CD4-positive, alpha-beta T cell (primary cell): ENCODE measurements at regions of chr6 and their contacts with region 1.

Region 1: GRCh38 chr6:32432050-32432450 is 7.6 kb upstream of the HLA-DRA start:
- DNase-seq: peak in 3 of 14 experiments; percentile 56 to 66 (median 63)
- ATAC-seq: no peak
- H3K4me3 ChIP-seq: no peak overlapping the region
- H3K4me3 Mint-ChIP-seq: no peak overlapping the region
- H3K27ac ChIP-seq: no peak overlapping the region
- H3K27ac Mint-ChIP-seq: no peak overlapping the region
- H3K4me1 ChIP-seq: no peaks in the 10 kb centered on the region
- H3K4me1 Mint-ChIP-seq: no peaks in the 10 kb centered on the region
- H3K27me3 ChIP-seq: no peaks in the 10 kb centered on the region
- H3K27me3 Mint-ChIP-seq: peaks cover 5% of the 10 kb centered on the region
- CTCF ChIP-seq: peak; percentile 64

Region 2: GRCh38 chr6:31615748-31616147 is 816.3 kb before region 1 on chr6:
- CTCF ChIA-PET with region 1: no interaction called
- POLR2A ChIA-PET with region 1: no interaction called
- intact Hi-C with region 1: no loop called
- DNase-seq: peak in 8 of 14 experiments; percentile 12 to 62 (median 35)
- ATAC-seq: no peak
- H3K4me3 ChIP-seq: peak overlapping the region; percentile 46
- H3K4me3 Mint-ChIP-seq: peak overlapping the region; percentile 85
- H3K27ac ChIP-seq: peak overlapping the region in 1 of 2 donors; percentile 29
- H3K27ac Mint-ChIP-seq: peak overlapping the region; percentile 86
- H3K4me1 ChIP-seq: peaks cover 27% of the 10 kb centered on the region
- H3K4me1 Mint-ChIP-seq: peaks cover 40% of the 10 kb centered on the region
- H3K27me3 ChIP-seq: no peaks in the 10 kb centered on the region
- H3K27me3 Mint-ChIP-seq: no peaks in the 10 kb centered on the region
- CTCF ChIP-seq: no peak

Region 3: DNA sequence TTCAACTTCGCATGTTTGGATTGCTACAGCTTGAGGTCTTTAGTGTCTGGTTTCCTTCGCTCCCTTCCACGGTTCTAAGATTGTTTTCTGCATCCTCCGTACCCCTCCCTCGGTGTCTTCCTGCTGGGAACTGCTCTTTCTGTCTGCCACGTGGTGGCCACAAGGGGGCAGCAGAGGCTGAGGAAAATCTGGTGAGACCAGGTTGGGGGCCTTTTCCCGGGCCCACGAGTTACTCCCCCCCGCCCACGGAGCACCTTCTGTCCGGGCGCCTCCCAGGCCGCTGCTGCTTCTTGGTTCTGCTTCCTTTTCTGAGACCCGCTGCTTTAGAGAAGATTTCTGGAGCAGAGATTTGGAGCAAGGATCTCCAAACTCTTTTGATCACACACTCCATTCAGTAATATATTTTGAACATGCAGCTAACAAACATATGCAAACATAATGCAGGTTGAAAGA is 187.1 kb before region 1 on chr6:
- CTCF ChIA-PET with region 1: no interaction called
- POLR2A ChIA-PET with region 1: no interaction called
- intact Hi-C with region 1: no loop called
- DNase-seq: peak; percentile 50 to 85 (median 66)
- ATAC-seq: peak; percentile 84
- H3K4me3 ChIP-seq: no peak overlapping the region
- H3K4me3 Mint-ChIP-seq: no peak overlapping the region
- H3K27ac ChIP-seq: no peak overlapping the region
- H3K27ac Mint-ChIP-seq: no peak overlapping the region
- H3K4me1 ChIP-seq: peaks cover 7% of the 10 kb centered on the region
- H3K4me1 Mint-ChIP-seq: peaks cover 6% of the 10 kb centered on the region
- H3K27me3 ChIP-seq: no peaks in the 10 kb centered on the region
- H3K27me3 Mint-ChIP-seq: no peaks in the 10 kb centered on the region
- CTCF ChIP-seq: peak; percentile 97

Region 4: DNA sequence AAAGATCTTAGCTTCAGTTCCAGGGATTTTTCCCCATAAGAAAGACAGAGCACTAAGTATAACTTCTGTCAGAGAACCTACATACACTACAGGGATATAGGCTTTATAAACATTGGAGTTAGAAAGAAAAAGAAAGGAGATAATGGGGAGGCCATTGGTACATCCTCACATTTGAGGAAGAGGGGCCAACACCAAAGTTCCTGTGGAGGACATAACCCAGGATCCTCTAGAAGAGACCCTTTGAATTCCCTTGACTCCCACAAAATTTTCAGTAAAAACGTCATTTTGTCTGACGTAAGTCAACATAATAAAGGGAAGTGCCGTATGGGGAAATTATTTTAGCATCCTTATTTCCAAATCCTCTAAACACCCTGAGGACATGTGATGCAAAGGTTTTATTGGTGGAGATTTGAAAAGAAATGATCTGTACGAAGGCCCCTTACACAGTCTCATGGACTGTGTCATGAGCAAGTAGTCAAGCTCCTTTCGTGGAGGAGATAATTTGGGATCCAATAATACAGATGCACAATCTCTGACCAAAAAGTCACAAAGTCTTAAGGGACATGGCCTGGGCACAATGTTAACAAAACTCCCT is 40.8 kb after region 1 on chr6:
- CTCF ChIA-PET with region 1: no interaction called
- POLR2A ChIA-PET with region 1: no interaction called
- intact Hi-C with region 1: no loop called
- DNase-seq: peak in 3 of 14 experiments; percentile 8 to 46 (median 37)
- ATAC-seq: no peak
- H3K4me3 ChIP-seq: no peak overlapping the region
- H3K4me3 Mint-ChIP-seq: no peak overlapping the region
- H3K27ac ChIP-seq: peak overlapping the region in 1 of 2 donors; percentile 49
- H3K27ac Mint-ChIP-seq: no peak overlapping the region
- H3K4me1 ChIP-seq: peaks cover 2% of the 10 kb centered on the region
- H3K4me1 Mint-ChIP-seq: no peaks in the 10 kb centered on the region
- H3K27me3 ChIP-seq: peaks cover 0 to 11% of the 10 kb centered on the region in 2 experiments
- H3K27me3 Mint-ChIP-seq: peaks cover 51% of the 10 kb centered on the region
- CTCF ChIP-seq: no peak

Region 5: GRCh38 chr6:32692019-32692418 is 260.0 kb after region 1 on chr6:
- CTCF ChIA-PET with region 1: interaction called, 4 read pairs
- POLR2A ChIA-PET with region 1: no interaction called
- intact Hi-C with region 1: loop called in 1 of 2 experiments (anchors 1 kb)
- DNase-seq: peak in 13 of 14 experiments; percentile 32 to 80 (median 48)
- ATAC-seq: peak; percentile 94
- H3K4me3 ChIP-seq: no peak overlapping the region
- H3K4me3 Mint-ChIP-seq: no peak overlapping the region
- H3K27ac ChIP-seq: no peak overlapping the region
- H3K27ac Mint-ChIP-seq: no peak overlapping the region
- H3K4me1 ChIP-seq: no peaks in the 10 kb centered on the region
- H3K4me1 Mint-ChIP-seq: peaks cover 20% of the 10 kb centered on the region
- H3K27me3 ChIP-seq: no peaks in the 10 kb centered on the region
- H3K27me3 Mint-ChIP-seq: peaks cover 43% of the 10 kb centered on the region
- CTCF ChIP-seq: peak; percentile 84

Region 6: GRCh38 chr6:32796848-32797776 is 365.1 kb after region 1 on chr6:
- CTCF ChIA-PET with region 1: interaction called, 3 read pairs
- POLR2A ChIA-PET with region 1: no interaction called
- intact Hi-C with region 1: loop called in 1 of 2 experiments (anchors 5 kb)
- DNase-seq: peak; percentile 57 to 88 (median 76)
- ATAC-seq: peak; percentile 73
- H3K4me3 ChIP-seq: peak overlapping the region; percentile 14
- H3K4me3 Mint-ChIP-seq: peak overlapping the region; percentile 40
- H3K27ac ChIP-seq: no peak overlapping the region
- H3K27ac Mint-ChIP-seq: no peak overlapping the region
- H3K4me1 ChIP-seq: peaks cover 9% of the 10 kb centered on the region
- H3K4me1 Mint-ChIP-seq: peaks cover 26% of the 10 kb centered on the region
- H3K27me3 ChIP-seq: peaks cover 14 to 21% of the 10 kb centered on the region in 2 experiments
- H3K27me3 Mint-ChIP-seq: peaks cover 65% of the 10 kb centered on the region
- CTCF ChIP-seq: peak; percentile 97

Region 7: DNA sequence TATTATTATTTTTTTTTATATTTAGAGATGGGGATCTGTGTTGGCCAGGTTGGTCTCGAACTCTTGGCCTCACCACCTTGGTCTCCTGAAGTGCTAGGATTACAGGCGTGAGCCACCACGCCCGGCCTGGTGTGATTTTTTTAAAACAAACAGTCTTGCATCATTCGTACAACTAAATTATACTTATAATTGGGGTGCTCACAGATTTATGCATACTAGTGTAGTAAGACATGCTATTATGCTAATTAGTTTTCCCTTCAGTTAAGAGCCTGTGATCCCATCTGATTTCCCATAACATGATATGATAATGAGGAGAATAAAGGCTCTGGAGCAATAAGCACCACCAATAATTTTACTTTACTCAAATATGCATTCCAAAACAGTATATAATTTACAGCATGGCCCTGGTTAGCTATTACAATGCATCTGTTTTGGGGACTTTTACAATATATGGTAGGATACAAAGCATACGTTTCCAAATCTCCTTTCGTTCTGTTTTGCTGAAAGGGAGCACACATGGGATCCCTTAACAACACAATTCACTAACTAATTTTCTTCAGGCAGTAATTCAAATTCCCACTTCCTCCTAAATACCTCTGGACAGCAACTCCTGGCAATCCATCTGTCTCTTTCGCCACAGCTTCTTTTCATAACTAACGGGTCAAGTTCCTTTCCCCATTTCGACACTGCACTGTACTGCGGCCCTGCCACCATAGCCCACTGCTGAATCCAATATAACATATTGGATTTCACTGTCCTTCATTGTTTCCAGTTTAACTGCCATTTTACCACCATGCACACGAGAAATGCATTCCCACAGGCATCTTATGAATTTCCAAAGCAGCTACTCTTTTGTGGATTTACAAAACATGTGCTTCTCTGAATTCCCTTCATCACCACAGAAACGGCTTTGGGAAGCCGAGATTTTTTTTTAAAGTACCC is 1958.8 kb after region 1 on chr6:
- CTCF ChIA-PET with region 1: no interaction called
- POLR2A ChIA-PET with region 1: no interaction called
- intact Hi-C with region 1: no loop called
- DNase-seq: peak in 2 of 14 experiments; percentile 25 to 30
- ATAC-seq: no peak
- H3K4me3 ChIP-seq: peak overlapping the region; percentile 82
- H3K4me3 Mint-ChIP-seq: no peak overlapping the region
- H3K27ac ChIP-seq: peak overlapping the region in 1 of 2 donors; percentile 41
- H3K27ac Mint-ChIP-seq: no peak overlapping the region
- H3K4me1 ChIP-seq: peaks cover 32% of the 10 kb centered on the region
- H3K4me1 Mint-ChIP-seq: peaks cover 44% of the 10 kb centered on the region
- H3K27me3 ChIP-seq: no peaks in the 10 kb centered on the region
- H3K27me3 Mint-ChIP-seq: no peaks in the 10 kb centered on the region
- CTCF ChIP-seq: no peak